Endothelial cell of umbilical vein (primary cell): ENCODE measurements at regions of chr10 and their contacts with region 1.

Region 1: DNA sequence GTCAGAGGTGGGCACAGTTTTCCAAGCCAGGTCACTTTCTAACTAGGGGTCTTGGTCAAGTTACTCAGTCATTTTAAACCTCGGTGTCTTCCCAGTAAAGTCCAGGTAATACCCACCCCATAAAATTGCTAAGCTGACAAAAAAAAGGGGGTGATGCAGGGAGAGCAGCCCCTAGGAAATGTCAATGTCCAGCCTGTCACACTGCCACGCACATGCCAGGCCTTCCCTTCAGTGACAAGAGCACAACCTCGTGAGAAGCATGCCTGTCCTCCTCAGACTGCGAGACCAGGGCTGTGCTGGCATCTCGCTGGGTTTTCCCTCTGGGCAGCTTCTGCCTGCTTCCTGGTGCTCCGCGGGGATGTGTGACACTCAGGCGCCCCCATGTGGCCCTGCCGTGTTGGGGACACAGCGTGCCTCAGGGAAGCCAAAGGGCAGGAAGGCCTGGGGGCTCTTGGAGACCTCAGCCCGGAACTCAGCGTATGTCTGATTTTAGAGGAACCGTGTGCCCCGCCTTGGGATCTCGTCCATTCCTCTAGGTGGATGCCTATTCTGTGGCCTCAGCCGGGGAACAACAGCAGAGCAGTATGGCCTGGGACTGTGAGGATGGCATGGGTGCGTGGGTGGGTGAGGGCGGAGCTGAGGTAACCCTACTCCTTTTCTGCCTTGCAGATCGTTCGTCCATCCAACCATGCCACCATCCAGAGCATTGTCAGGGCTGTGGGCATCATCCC is 10.2 kb upstream of the GDF2 start:
- DNase-seq: peak; percentile 46
- H3K4me3 ChIP-seq: no peak overlapping the region
- H3K27ac ChIP-seq: no peak overlapping the region
- H3K4me1 ChIP-seq: no peaks in the 10 kb centered on the region
- H3K27me3 ChIP-seq: no peaks in the 10 kb centered on the region
- CTCF ChIP-seq: peak; percentile 62 to 83
- POLR2A ChIP-seq: no peak

Region 2: DNA sequence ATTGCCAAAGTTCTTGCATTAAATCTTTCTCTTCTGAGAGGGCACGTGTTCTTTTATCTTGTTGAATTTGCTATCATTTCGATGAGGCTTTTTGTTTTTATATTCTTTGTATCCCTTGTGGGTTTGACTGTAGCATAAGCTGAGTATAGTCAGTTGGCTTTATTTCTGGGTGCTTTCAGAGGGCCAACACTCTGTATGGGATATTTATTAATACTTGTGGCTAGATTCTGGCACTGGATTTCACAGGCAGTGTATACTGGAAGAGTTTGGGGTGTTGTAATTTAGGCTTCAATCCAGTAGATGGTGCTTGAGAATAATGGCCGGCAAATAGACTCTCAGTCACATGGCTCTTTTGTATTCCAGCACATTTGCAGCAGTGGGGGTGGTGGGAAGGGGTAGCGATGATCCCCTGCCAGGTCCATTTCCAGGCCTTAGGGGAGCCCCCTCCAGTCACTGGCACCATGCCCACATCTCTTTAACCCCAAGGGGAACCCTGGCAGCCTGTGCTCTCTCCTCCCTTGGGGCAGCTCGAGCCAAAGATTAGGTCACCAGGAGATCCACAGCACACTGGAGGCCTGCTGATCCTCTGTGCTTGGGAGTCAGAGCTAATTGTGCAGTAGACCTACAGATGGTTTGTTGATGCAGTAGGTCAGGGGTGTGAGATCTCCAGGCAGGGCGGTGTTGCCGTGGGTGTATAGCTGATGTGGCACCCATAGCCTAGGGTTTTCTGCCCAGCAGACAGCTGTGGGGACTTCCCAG is 319.1 kb before region 1 on chr10:
- CTCF ChIA-PET with region 1: interaction called, 46 read pairs
- POLR2A ChIA-PET with region 1: no interaction called
- dilution Hi-C with region 1: no loop called
- intact Hi-C with region 1: loop called (anchors 5 kb)
- DNase-seq: peak; percentile 17
- H3K4me3 ChIP-seq: no peak overlapping the region
- H3K27ac ChIP-seq: no peak overlapping the region
- H3K4me1 ChIP-seq: no peaks in the 10 kb centered on the region
- H3K27me3 ChIP-seq: peaks cover 0 to 4% of the 10 kb centered on the region in 2 experiments
- CTCF ChIP-seq: peak in 1 of 2 donors; percentile 22
- POLR2A ChIP-seq: no peak

Region 3: GRCh38 chr10:47024399-47025252 is 287.5 kb before region 1 on chr10:
- CTCF ChIA-PET with region 1: interaction called, 47 read pairs
- POLR2A ChIA-PET with region 1: no interaction called
- dilution Hi-C with region 1: no loop called
- intact Hi-C with region 1: loop called (anchors 1 kb)
- DNase-seq: peak; percentile 45
- H3K4me3 ChIP-seq: no peak overlapping the region
- H3K27ac ChIP-seq: no peak overlapping the region
- H3K4me1 ChIP-seq: no peaks in the 10 kb centered on the region
- H3K27me3 ChIP-seq: no peaks in the 10 kb centered on the region
- CTCF ChIP-seq: peak; percentile 66 to 87
- POLR2A ChIP-seq: no peak

Region 4: GRCh38 chr10:47031211-47031900 is 280.7 kb before region 1 on chr10:
- CTCF ChIA-PET with region 1: interaction called, 47 read pairs
- POLR2A ChIA-PET with region 1: no interaction called
- dilution Hi-C with region 1: no loop called
- intact Hi-C with region 1: no loop called
- DNase-seq: no peak
- H3K4me3 ChIP-seq: no peak overlapping the region
- H3K27ac ChIP-seq: no peak overlapping the region
- H3K4me1 ChIP-seq: no peaks in the 10 kb centered on the region
- H3K27me3 ChIP-seq: no peaks in the 10 kb centered on the region
- CTCF ChIP-seq: no peak
- POLR2A ChIP-seq: no peak

Region 5: GRCh38 chr10:47047671-47048525 is 264.2 kb before region 1 on chr10:
- CTCF ChIA-PET with region 1: interaction called, 192 read pairs
- POLR2A ChIA-PET with region 1: no interaction called
- dilution Hi-C with region 1: no loop called
- intact Hi-C with region 1: loop called (anchors 1 kb)
- DNase-seq: peak; percentile 46
- H3K4me3 ChIP-seq: no peak overlapping the region
- H3K27ac ChIP-seq: no peak overlapping the region
- H3K4me1 ChIP-seq: no peaks in the 10 kb centered on the region
- H3K27me3 ChIP-seq: no peaks in the 10 kb centered on the region
- CTCF ChIP-seq: peak; percentile 77 to 89
- POLR2A ChIP-seq: no peak

Region 6: GRCh38 chr10:47165711-47166524 is 146.2 kb before region 1 on chr10:
- CTCF ChIA-PET with region 1: no interaction called
- POLR2A ChIA-PET with region 1: no interaction called
- dilution Hi-C with region 1: no loop called
- intact Hi-C with region 1: no loop called
- DNase-seq: peak; percentile 11
- H3K4me3 ChIP-seq: no peak overlapping the region
- H3K27ac ChIP-seq: no peak overlapping the region
- H3K4me1 ChIP-seq: no peaks in the 10 kb centered on the region
- H3K27me3 ChIP-seq: no peaks in the 10 kb centered on the region
- CTCF ChIP-seq: no peak
- POLR2A ChIP-seq: no peak

Region 7: DNA sequence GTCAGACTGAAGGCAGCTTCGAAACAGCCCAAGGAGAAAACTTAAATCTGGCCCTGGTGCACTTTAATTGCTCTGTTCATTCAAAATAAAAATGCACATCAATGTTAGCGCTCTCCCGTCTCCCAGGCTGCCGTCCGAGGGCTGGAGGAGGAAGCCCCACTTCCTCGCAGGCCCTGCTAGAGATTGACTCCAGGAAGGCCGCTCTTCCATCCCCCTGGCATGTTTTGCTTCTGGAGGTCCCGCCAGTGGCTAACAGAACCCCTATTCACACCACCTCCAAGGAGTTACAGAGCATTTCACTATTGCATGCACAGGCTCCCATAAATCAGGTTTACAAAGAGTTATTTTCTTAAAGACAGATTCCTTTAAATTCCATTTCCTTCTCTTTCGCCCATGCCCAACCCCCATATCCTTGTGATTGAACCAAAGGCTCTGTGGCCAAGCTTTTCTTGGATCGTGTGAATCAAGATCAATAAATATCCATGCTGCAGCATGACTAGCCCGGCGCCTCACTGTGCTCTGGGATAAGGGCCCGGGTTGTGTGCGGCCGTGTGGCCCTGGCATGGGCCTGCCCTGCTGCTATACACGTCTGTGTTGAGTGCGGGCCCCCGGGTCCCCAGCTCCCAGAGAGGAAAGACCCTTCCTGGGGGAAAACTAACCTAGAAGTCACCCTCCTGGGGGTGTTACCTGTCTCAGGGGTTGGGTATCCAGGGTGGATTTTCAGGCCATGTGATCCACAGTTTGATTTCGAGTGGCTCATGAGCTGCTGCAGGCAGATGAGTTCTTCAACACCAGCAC is 130.8 kb before region 1 on chr10:
- CTCF ChIA-PET with region 1: no interaction called
- POLR2A ChIA-PET with region 1: no interaction called
- dilution Hi-C with region 1: no loop called
- intact Hi-C with region 1: no loop called
- DNase-seq: no peak
- H3K4me3 ChIP-seq: no peak overlapping the region
- H3K27ac ChIP-seq: no peak overlapping the region
- H3K4me1 ChIP-seq: no peaks in the 10 kb centered on the region
- H3K27me3 ChIP-seq: no peaks in the 10 kb centered on the region
- CTCF ChIP-seq: no peak
- POLR2A ChIP-seq: no peak

Region 8: DNA sequence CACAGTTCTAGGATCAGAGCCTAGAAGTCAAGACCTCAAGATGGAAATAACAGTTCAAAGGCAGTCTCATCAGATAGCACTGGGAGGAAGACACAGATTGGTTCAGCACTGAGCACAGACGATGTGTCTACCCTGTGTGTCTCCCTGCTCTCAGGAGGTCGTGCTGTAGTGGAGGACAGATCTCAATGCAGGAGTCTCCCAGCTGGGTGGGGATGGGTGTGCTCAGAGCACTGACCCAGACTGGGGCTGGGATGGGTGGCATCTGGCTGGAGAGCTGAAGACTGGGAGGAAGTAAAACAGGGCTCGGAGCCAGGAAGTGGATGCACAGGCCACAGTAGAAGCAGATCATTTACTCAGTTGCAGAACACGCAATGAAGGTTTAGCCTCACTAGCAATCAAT is 81.6 kb before region 1 on chr10:
- CTCF ChIA-PET with region 1: no interaction called
- POLR2A ChIA-PET with region 1: no interaction called
- dilution Hi-C with region 1: no loop called
- intact Hi-C with region 1: no loop called
- DNase-seq: no peak
- H3K4me3 ChIP-seq: no peak overlapping the region
- H3K27ac ChIP-seq: no peak overlapping the region
- H3K4me1 ChIP-seq: no peaks in the 10 kb centered on the region
- H3K27me3 ChIP-seq: no peaks in the 10 kb centered on the region
- CTCF ChIP-seq: no peak
- POLR2A ChIP-seq: no peak

Region 9: GRCh38 chr10:47296156-47296894 is 15.8 kb before region 1 on chr10:
- CTCF ChIA-PET with region 1: interaction called, 18 read pairs
- POLR2A ChIA-PET with region 1: no interaction called
- dilution Hi-C with region 1: no loop called
- intact Hi-C with region 1: loop called (anchors 1 kb)
- DNase-seq: no peak
- H3K4me3 ChIP-seq: no peak overlapping the region
- H3K27ac ChIP-seq: no peak overlapping the region
- H3K4me1 ChIP-seq: no peaks in the 10 kb centered on the region
- H3K27me3 ChIP-seq: peaks cover 21 to 33% of the 10 kb centered on the region in 2 experiments
- CTCF ChIP-seq: no peak
- POLR2A ChIP-seq: no peak

Region 10: DNA sequence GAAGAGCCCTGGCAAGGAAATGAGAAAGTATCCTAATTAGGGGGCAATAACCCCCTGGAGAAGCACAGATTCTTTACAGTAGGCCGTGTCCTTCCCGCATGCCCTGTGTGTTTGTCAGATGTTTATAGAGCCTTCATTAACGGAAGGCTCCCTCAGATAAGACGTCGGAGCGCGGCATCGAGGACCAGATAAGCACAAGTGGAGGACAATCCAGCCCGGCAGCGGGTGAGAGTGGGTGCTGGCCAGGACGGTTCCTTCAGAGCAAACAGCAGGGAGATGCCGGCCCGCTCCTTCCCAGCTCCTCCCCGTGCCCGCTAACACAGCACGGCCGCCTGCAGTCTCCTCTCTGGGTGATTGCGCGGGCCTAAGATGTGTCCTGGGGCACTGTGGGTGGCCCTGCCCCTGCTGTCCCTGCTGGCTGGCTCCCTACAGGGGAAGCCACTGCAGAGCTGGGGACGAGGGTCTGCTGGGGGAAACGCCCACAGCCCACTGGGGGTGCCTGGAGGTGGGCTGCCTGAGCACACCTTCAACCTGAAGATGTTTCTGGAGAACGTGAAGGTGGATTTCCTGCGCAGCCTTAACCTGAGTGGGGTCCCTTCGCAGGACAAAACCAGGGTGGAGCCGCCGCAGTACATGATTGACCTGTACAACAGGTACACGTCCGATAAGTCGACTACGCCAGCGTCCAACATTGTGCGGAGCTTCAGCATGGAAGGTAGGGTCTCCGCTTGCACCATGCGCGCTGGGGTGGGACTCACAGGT is 10.4 kb after region 1 on chr10 and contains the start of gene GDF2:
- CTCF ChIA-PET with region 1: interaction called, 15 read pairs
- POLR2A ChIA-PET with region 1: no interaction called
- dilution Hi-C with region 1: no loop called
- intact Hi-C with region 1: no loop called
- DNase-seq: no peak
- H3K4me3 ChIP-seq: no peak within 1 kb of the TSS
- H3K27ac ChIP-seq: no peak within 1 kb of the TSS
- H3K4me1 ChIP-seq: no peaks in the 10 kb centered on the region
- H3K27me3 ChIP-seq: peaks cover 2 to 3% of the 10 kb centered on the region in 2 experiments
- CTCF ChIP-seq: no peak
- POLR2A ChIP-seq: no peak
- total RNA-seq, gene GDF2: not detected in 2 replicates

Region 11: GRCh38 chr10:47421057-47421952 is 109.2 kb after region 1 on chr10:
- CTCF ChIA-PET with region 1: no interaction called
- POLR2A ChIA-PET with region 1: no interaction called
- dilution Hi-C with region 1: no loop called
- intact Hi-C with region 1: no loop called
- DNase-seq: no peak
- H3K4me3 ChIP-seq: no peak overlapping the region
- H3K27ac ChIP-seq: no peak overlapping the region
- H3K4me1 ChIP-seq: no peaks in the 10 kb centered on the region
- H3K27me3 ChIP-seq: no peaks in the 10 kb centered on the region
- CTCF ChIP-seq: no peak
- POLR2A ChIP-seq: no peak